H1 (cell line): ENCODE measurements at regions of chr17 and their contacts with region 1.

Region 1: DNA sequence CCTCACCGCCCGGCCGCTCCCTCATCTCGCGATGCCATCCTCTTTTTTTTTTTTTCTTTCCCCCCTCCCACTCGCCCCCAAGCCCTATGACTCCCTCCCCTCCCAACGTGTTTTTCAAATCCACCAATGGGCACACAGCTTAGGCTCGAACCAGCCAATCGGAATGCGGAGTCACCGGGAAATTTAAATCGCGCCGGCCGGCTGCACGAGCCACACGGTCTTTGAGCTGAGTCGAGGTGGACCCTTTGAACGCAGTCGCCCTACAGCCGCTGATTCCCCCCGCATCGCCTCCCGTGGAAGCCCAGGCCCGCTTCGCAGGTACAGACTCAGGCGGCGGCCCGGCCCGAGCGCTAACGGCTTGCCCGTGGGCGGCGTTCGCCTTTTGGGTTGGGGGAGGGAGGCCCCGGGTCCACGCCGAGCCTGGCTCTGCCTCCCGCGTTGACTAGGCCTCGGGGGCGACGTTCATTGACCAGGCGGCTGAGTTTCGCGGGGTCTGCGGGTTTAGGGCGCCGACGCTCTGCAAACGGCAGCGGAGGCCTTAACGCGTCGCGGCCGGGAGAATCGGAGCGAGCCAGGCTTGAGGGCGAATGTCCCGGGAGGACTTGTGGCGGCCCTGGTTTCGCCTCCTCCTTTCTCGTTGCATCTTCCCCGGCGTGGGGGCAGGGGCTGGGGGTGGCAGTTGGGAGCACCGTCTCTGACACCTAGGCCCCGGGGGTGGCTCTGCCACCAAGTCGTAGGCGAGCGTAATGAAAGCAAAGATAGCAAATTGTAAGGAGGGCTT is at the start of gene KPNA2:
- DNase-seq: peak; percentile 93 to 94
- H3K4me3 ChIP-seq: peak within 1 kb of the TSS; percentile 92 to 98 (median 94)
- H3K27ac ChIP-seq: peak within 1 kb of the TSS; percentile 96
- H3K4me1 ChIP-seq: peaks cover 5 to 16% (median 11%) of the 10 kb centered on the region in 4 experiments; a peak in 6 of 7 replicates
- H3K27me3 ChIP-seq: no peaks in the 10 kb centered on the region
- CTCF ChIP-seq: no peak
- EP300 ChIP-seq: no peak
- POLR2A ChIP-seq: peak; percentile 98 to 99
- RAD21 ChIP-seq: no peak
- total RNA-seq, gene KPNA2: 599 and 612 TPM in 2 replicates

Region 2: GRCh38 chr17:67974598-67975066 is 61.1 kb before region 1 on chr17:
- CTCF ChIA-PET with region 1: no interaction called
- POLR2A ChIA-PET with region 1: interaction called, 14 read pairs
- DNase-seq: peak; percentile 72 to 87
- H3K4me3 ChIP-seq: peak overlapping the region; percentile 70 to 87 (median 78)
- H3K27ac ChIP-seq: peak overlapping the region; percentile 95
- H3K4me1 ChIP-seq: peaks cover 0 to 7% (median 2%) of the 10 kb centered on the region in 4 experiments; a peak in 4 of 7 replicates
- H3K27me3 ChIP-seq: no peaks in the 10 kb centered on the region
- CTCF ChIP-seq: peak in 1 of 3 experiments; percentile 6; a peak in 1 of 4 replicates
- EP300 ChIP-seq: peak in 1 of 2 experiments; percentile 27; a peak in 1 of 3 replicates
- POLR2A ChIP-seq: peak; percentile 45 to 89
- RAD21 ChIP-seq: no peak

Region 3: GRCh38 chr17:68019675-68020408 is 15.9 kb before region 1 on chr17:
- CTCF ChIA-PET with region 1: interaction called, 13 read pairs
- POLR2A ChIA-PET with region 1: interaction called, 104 read pairs
- DNase-seq: peak; percentile 94 to 100
- H3K4me3 ChIP-seq: peak overlapping the region; percentile 63 to 72 (median 70)
- H3K27ac ChIP-seq: peak overlapping the region; percentile 52
- H3K4me1 ChIP-seq: peaks cover 0 to 3% (median 1%) of the 10 kb centered on the region in 4 experiments; a peak in 4 of 7 replicates
- H3K27me3 ChIP-seq: no peaks in the 10 kb centered on the region
- CTCF ChIP-seq: peak; percentile 27 to 52 (median 43)
- EP300 ChIP-seq: no peak
- POLR2A ChIP-seq: peak; percentile 73 to 80; a peak in 2 of 3 replicates
- RAD21 ChIP-seq: peak in 1 of 2 experiments; percentile 28; a peak in 1 of 4 replicates

Region 4: GRCh38 chr17:68048996-68049395 is 13.3 kb after region 1 on chr17:
- CTCF ChIA-PET with region 1: no interaction called
- POLR2A ChIA-PET with region 1: interaction called, 134 read pairs
- DNase-seq: no peak
- H3K4me3 ChIP-seq: no peak overlapping the region
- H3K27ac ChIP-seq: no peak overlapping the region
- H3K4me1 ChIP-seq: no peaks in the 10 kb centered on the region
- H3K27me3 ChIP-seq: no peaks in the 10 kb centered on the region
- CTCF ChIP-seq: no peak
- EP300 ChIP-seq: no peak
- POLR2A ChIP-seq: no peak
- RAD21 ChIP-seq: no peak

Region 5: GRCh38 chr17:68057531-68057952 is 21.8 kb after region 1 on chr17:
- CTCF ChIA-PET with region 1: no interaction called
- POLR2A ChIA-PET with region 1: interaction called, 109 read pairs
- DNase-seq: no peak
- H3K4me3 ChIP-seq: no peak overlapping the region
- H3K27ac ChIP-seq: no peak overlapping the region
- H3K4me1 ChIP-seq: no peaks in the 10 kb centered on the region
- H3K27me3 ChIP-seq: no peaks in the 10 kb centered on the region
- CTCF ChIP-seq: peak in 2 of 3 experiments; percentile 53 to 66; a peak in 3 of 4 replicates
- EP300 ChIP-seq: no peak
- POLR2A ChIP-seq: no peak
- RAD21 ChIP-seq: peak; percentile 54 to 65

Region 6: DNA sequence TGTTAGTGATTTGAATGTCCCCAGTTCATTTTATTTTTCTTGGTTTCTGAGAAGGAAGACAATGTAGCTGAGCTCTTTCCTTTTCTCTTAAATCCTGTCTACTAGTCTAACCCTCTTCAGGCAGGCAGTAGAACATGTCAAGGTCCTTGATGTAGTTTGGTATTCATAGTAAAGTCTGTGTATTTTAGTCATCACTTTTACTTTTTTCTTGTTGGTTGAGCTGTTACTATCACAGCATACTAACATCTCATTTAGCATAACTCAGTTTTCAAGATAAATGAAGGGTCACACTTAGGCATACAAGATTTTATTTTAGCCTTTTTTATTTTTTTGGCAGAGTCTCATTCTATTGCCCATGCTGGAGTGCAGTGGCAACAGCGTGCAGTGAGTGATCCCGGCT is 70.4 kb after region 1 on chr17:
- CTCF ChIA-PET with region 1: no interaction called
- POLR2A ChIA-PET with region 1: no interaction called
- DNase-seq: no peak
- H3K4me3 ChIP-seq: no peak overlapping the region
- H3K27ac ChIP-seq: no peak overlapping the region
- H3K4me1 ChIP-seq: peaks cover 0 to under 1% (median under 1%) of the 10 kb centered on the region in 4 experiments; a peak in 1 of 7 replicates
- H3K27me3 ChIP-seq: peaks cover 0 to 7% (median 3%) of the 10 kb centered on the region in 4 experiments; a peak in 4 of 7 replicates
- CTCF ChIP-seq: no peak
- EP300 ChIP-seq: no peak
- POLR2A ChIP-seq: no peak
- RAD21 ChIP-seq: no peak